Activated naive CD4-positive, alpha-beta T cell treated with anti-CD3 and anti-CD28 coated beads for 36 hours (primary cell): ENCODE measurements at regions of chr11 and their contacts with region 1.

Region 1: GRCh38 chr11:104700609-104701008 is 197.7 kb downstream of the CASP12 start:
- DNase-seq: no peak
- H3K4me3 Mint-ChIP-seq: no peak overlapping the region
- H3K27ac Mint-ChIP-seq: no peak overlapping the region
- H3K4me1 Mint-ChIP-seq: peaks cover 28% of the 10 kb centered on the region
- H3K27me3 Mint-ChIP-seq: no peaks in the 10 kb centered on the region

Region 2: GRCh38 chr11:104668797-104669463 is 31.7 kb before region 1 on chr11:
- CTCF ChIA-PET with region 1: no interaction called
- intact Hi-C with region 1: loop called (anchors 1 kb)
- DNase-seq: no peak
- H3K4me3 Mint-ChIP-seq: no peak overlapping the region
- H3K27ac Mint-ChIP-seq: no peak overlapping the region
- H3K4me1 Mint-ChIP-seq: peaks cover 13% of the 10 kb centered on the region
- H3K27me3 Mint-ChIP-seq: no peaks in the 10 kb centered on the region